Calu3 (cell line): ENCODE measurements at regions of chr4 and their contacts with region 1.

Region 1: DNA sequence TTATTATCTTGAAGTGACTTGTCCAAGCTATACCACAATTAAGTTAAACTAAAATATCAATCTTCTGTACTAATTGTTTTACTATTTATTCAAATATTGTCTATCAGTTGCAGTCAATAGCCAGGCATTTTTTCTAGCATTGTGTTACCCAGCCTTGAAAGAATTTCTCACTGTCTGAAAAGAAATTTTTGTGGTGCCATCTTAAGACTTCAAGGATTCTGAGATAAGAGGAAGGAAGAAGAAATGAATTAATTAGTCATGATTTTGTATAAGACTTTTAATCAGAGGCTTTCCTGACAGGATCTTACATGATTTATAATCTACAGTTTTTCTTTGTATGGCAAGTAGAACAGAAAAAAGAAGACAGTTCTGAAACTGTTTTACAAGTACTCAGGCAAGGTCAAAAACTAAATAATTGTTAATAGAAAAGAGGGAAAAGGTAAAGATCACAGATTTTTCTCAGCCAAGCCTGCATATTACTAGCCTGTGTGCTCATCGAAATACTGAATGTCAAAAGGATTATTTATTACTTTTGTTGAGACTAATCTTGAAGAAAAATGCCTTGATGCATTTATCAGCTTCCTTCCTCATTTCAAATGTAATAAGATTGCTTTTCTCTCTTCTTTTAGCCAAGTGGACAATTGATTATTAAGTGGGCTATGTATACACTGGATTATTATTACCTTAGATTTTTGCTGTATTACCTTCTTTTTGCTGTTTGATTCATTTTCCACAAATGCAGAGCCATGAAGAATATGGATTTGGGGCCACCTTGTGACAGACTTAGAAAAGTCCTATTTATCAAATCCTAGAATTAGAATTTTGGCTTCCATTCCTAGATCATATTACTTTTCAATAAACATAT is 53.8 kb downstream of the CXCL1 start:
- DNase-seq: peak; percentile 41
- H3K4me3 Mint-ChIP-seq: no peak overlapping the region
- H3K27ac Mint-ChIP-seq: peak overlapping the region; percentile 23
- H3K4me1 Mint-ChIP-seq: peaks cover 22% of the 10 kb centered on the region
- H3K27me3 Mint-ChIP-seq: no peaks in the 10 kb centered on the region
- CTCF ChIP-seq: no peak

Region 2: DNA sequence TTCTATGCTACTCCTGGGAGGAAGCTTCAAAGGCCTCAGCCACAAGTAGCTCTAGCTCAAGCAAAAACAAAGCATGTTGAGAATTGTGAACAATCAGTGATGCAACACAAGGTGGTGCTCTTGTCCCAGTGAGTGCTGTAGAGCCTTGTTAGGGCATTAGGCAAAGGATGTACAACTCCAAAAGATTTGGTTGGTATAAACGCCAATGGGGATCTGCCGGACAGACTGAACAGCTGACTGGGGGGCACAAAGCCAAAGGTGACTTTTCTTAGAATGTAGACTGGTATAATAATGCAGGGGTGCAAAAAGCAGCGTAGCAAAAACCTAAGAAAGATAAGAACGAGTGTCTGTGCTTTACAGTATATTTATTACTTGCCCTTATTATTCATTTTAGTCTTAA is 581.5 kb before region 1 on chr4:
- CTCF ChIA-PET with region 1: no interaction called
- intact Hi-C with region 1: loop called (anchors 5 kb)
- DNase-seq: peak; percentile 35
- H3K4me3 Mint-ChIP-seq: no peak overlapping the region
- H3K27ac Mint-ChIP-seq: no peak overlapping the region
- H3K4me1 Mint-ChIP-seq: peaks cover 14% of the 10 kb centered on the region
- H3K27me3 Mint-ChIP-seq: no peaks in the 10 kb centered on the region
- CTCF ChIP-seq: no peak

Region 3: DNA sequence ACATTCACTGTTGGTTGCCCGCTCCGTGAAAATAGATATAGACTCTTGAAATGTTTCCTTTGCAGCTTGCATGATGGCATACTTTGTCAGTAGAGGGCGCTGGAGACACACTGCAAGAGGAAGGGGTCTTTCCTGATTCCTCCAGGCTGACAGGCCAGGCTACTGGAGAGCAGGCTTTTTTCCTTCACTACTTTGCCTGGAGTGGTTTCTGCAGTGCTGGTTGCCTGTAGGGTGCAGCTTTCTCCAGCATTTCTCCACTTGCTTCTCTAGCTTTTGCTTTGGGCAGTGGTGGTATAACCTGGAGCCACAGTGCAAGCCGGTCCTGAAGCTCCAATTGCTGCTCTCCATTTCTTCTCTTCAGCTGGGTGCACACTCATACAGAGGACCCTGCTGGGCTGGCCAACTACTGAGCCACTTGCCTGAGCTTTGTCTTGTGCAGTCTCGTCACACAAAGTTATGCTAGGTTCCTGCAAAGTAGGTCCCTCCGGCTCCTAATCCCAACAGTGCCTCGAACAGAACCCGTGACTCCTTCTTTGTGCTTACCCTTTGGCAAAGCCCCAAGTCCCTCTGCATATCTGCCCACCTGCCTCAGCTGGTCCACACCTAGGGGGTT is 349.1 kb before region 1 on chr4:
- CTCF ChIA-PET with region 1: no interaction called
- intact Hi-C with region 1: loop called (anchors 10 kb)
- DNase-seq: peak; percentile 70
- H3K4me3 Mint-ChIP-seq: no peak overlapping the region
- H3K27ac Mint-ChIP-seq: no peak overlapping the region
- H3K4me1 Mint-ChIP-seq: no peaks in the 10 kb centered on the region
- H3K27me3 Mint-ChIP-seq: no peaks in the 10 kb centered on the region
- CTCF ChIP-seq: peak; percentile 71

Region 4: DNA sequence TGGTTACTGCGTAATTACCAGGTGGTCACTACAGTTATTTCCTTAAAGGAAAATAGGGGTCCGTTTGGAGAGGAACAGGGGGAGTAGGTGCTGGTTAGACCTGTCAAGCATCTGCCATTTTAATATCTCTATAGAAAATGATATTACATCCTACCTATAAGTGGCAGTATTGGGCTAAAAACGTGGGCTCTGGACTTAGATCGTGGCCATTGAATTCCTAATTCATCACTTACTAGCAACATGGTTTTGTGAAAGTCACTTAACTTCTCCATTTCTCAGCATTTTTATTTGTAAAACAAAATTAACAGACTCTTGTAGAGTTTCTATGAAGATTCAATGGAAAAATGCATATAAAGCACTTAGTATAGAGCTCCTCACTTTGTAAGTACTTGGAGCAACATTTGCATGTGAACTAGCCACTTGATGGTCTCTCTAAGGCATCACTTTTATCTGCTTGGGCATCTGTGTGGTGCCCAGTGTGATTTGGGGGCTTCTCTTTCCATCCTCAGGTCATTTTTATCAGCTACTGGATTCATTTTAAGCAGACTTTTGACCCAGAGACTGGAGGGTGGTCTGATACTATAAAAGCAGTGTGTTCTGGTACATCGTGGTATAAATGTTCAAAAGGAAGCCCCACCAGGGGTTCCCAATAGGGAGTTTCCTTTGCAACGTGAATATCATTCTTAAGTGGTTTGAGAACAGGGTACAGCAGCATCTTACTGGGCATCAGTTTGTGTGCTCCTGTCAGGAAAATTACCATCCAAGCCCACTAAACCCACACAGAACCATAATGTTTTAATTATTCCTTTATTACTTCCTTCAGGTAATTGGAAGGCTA is 260.1 kb before region 1 on chr4:
- CTCF ChIA-PET with region 1: no interaction called
- intact Hi-C with region 1: loop called (anchors 1 kb)
- DNase-seq: no peak
- H3K4me3 Mint-ChIP-seq: no peak overlapping the region
- H3K27ac Mint-ChIP-seq: peak overlapping the region; percentile 50
- H3K4me1 Mint-ChIP-seq: peaks cover 33% of the 10 kb centered on the region
- H3K27me3 Mint-ChIP-seq: no peaks in the 10 kb centered on the region
- CTCF ChIP-seq: peak; percentile 28